HEK293 (cell line): ENCODE measurements at regions of chr20 and their contacts with region 1.

Region 1: GRCh38 chr20:2651772-2652723 is at the start of gene NOP56:
- H3K4me3 ChIP-seq: peak within 1 kb of the TSS; percentile 84
- H3K27ac ChIP-seq: peak within 1 kb of the TSS; percentile 98
- H3K4me1 ChIP-seq: peaks cover 7% of the 10 kb centered on the region
- CTCF ChIP-seq: peak; percentile 25; the same call in 1 of the 2 replicates

Region 2: GRCh38 chr20:2470423-2471193 is 181.4 kb before region 1 on chr20 and contains the start of gene SNRPB:
- CTCF ChIA-PET with region 1: interaction called, 4 read pairs
- POLR2A ChIA-PET with region 1: interaction called, 49 read pairs
- H3K4me3 ChIP-seq: peak within 1 kb of the TSS; percentile 74
- H3K27ac ChIP-seq: peak within 1 kb of the TSS; percentile 100
- H3K4me1 ChIP-seq: no peaks in the 10 kb centered on the region; the same call in 1 of the 2 replicates
- CTCF ChIP-seq: peak; percentile 14; the same call in 1 of the 2 replicates

Region 3: GRCh38 chr20:2523919-2524708 is 127.9 kb before region 1 on chr20:
- CTCF ChIA-PET with region 1: interaction called, 166 read pairs
- POLR2A ChIA-PET with region 1: interaction called, 25 read pairs
- H3K4me3 ChIP-seq: peak overlapping the region; percentile 54
- H3K27ac ChIP-seq: peak overlapping the region; percentile 83
- H3K4me1 ChIP-seq: no peaks in the 10 kb centered on the region; the same call in 1 of the 2 replicates
- CTCF ChIP-seq: peak; percentile 94

Region 4: DNA sequence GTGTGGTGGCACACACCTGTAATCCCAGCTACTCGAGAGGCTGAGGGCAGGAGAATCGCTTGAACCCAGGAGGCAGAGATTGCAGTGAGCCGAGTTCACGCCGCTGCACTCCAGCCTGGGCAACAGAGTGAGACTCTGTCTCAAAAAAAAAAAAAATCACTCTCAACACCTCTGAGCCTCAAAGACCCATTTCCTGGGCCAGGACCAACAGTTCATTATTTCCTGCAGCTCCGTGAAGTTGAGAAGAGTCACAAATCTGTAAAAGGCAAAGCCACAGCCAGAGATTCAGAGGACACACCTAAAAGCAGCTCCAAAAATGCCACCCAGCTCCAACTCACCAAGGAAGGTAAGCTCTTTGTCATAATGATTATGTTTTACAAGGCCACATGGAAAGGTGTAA is 14.8 kb before region 1 on chr20:
- CTCF ChIA-PET with region 1: interaction called, 15 read pairs
- POLR2A ChIA-PET with region 1: interaction called, 9 read pairs
- H3K4me3 ChIP-seq: no peak overlapping the region
- H3K27ac ChIP-seq: no peak overlapping the region
- H3K4me1 ChIP-seq: no peaks in the 10 kb centered on the region
- CTCF ChIP-seq: no peak

Region 5: DNA sequence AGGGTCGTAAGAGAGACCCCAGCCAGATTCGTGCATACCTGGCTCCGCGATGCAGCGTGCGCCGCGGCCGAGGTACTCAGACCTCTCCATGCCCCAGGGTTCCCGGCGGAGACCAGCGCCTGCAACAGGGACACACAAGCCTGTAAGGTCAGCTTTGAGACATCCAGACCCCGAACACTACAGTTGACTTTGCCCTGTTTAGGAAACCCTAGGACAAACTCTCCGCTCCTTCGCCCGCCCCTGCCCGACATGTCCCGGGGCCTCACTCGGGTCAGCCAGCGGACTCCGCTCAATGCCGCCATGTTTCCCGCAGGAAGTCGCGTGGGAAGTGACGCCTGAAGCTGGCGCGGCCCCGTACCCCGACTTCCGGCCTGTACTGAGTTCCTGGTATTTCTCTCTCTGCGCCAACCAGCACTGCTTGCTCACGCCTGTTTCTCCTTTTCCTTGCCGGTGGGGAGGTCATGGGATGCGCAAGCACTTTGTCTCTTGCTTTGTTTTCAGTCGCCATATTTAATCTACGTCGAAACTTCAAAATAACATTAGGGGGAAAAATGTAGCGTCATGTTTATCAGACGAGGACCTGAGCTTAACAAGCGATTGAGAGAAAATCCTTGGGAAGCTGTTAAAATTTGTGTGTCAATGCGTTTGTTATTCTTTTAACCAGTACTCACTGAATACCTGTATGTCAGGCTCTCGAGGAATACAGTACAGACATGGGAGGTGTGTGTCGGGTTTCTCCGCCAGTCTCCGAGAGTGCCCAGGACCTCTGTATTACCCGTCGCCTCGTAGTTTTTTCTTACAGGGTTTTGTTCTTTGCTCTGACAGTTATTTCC is 12.1 kb after region 1 on chr20 and contains the start of gene IDH3B:
- CTCF ChIA-PET with region 1: interaction called, 4 read pairs
- POLR2A ChIA-PET with region 1: interaction called, 133 read pairs
- H3K4me3 ChIP-seq: peak within 1 kb of the TSS; percentile 78
- H3K27ac ChIP-seq: peak within 1 kb of the TSS; percentile 84
- H3K4me1 ChIP-seq: peaks cover 8% of the 10 kb centered on the region
- CTCF ChIP-seq: no peak

Region 6: DNA sequence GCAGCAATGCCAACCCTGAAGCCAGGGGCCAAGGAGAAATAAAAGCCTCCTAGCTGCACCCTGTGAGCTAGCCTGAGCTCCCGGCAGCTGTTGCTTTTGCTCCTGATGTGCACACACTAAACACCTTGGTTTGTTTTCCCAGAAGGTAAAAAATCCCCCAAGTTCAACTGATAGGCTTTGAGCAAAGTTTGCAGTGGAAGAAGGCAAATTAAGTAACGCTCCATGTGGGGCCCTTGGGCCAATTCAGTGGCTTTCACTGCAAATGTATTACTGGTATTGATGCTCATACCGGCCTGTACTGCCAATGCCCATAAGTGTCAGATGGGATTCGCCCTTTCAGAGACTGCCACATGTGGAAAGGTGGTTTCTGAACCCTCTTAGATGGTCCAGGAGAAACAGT is 21.4 kb after region 1 on chr20:
- CTCF ChIA-PET with region 1: interaction called, 4 read pairs
- POLR2A ChIA-PET with region 1: interaction called, 133 read pairs
- H3K4me3 ChIP-seq: no peak overlapping the region
- H3K27ac ChIP-seq: no peak overlapping the region
- H3K4me1 ChIP-seq: no peaks in the 10 kb centered on the region
- CTCF ChIP-seq: no peak

Region 7: DNA sequence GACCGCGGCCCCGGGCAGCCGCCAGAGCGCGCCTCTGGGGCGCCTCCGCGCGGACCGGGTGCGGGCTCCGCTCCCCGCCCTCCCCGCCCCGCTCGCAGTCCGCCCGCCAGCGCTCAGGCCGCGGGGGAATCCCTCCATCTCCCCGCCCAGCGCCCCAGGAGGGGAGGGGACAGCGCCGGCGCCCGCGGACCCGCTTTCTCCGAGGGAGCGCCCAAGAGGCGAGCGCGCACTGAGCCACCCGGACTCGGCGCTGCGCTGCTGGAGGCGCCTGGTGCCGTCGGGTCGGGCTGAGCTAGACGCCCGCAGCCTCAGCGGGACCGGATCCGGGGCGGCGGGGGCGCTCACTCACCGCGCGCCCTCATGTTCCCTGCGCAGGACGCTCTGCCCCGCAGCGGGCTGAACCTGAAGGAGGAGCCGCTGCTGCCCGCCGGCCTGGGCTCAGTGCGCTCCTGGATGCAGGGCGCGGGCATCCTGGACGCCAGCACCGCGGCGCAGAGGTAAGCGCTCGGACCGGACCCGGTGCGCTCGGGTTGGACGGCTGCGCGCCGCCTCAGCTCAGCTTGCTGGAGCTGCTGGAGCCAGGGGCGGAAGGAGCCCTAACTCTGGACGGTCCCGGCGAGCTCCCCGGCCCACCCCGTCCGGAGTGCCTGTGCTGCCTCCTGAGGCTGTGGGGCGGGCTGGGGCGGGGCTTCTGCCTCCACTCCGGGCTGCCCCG is 41.4 kb after region 1 on chr20:
- CTCF ChIA-PET with region 1: interaction called, 3 read pairs
- POLR2A ChIA-PET with region 1: interaction called, 10 read pairs
- H3K4me3 ChIP-seq: peak overlapping the region; percentile 40
- H3K27ac ChIP-seq: peak overlapping the region; percentile 34; the same call in 1 of the 2 replicates
- H3K4me1 ChIP-seq: peaks cover 13% of the 10 kb centered on the region
- CTCF ChIP-seq: no peak

Region 8: GRCh38 chr20:2872459-2873009 is 220.5 kb after region 1 on chr20:
- CTCF ChIA-PET with region 1: no interaction called
- POLR2A ChIA-PET with region 1: no interaction called
- H3K4me3 ChIP-seq: peak overlapping the region; percentile 44
- H3K27ac ChIP-seq: peak overlapping the region; percentile 69; the same call in 1 of the 2 replicates
- H3K4me1 ChIP-seq: peaks cover 15% of the 10 kb centered on the region
- CTCF ChIP-seq: no peak